ENCODE measurements at regions of chr12 and their contacts with region 1.

Region 1: DNA sequence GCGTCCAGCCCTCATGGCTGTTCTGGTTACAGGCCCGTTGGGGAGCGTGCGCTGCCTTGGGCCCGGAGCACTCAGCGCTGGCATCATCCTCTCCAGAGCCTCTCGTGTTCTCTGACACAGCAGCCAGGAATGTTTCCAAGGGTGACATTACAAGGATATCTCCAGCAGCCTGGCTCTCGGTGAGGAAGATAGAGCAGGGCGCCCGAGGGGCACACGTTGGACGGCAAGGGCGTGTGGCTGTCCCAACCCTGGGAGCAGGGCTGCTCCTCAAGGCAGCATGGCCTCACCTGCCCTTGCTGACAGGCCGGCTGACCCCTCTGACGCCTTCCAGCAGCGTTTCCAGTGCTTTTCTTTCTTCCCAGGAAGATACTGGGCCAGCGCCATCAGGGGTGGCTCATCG is 14.4 kb downstream of the LRCOL1 start:
- DNase-seq: no peak
- H3K4me3 Mint-ChIP-seq: no peak overlapping the region
- H3K27ac Mint-ChIP-seq: no peak overlapping the region
- H3K4me1 Mint-ChIP-seq: peaks cover 23% of the 10 kb centered on the region
- H3K27me3 Mint-ChIP-seq: peaks cover 29% of the 10 kb centered on the region

Region 2: GRCh38 chr12:132040906-132041606 is 555.0 kb before region 1 on chr12:
- CTCF ChIA-PET with region 1: no interaction called
- POLR2A ChIA-PET with region 1: no interaction called
- DNase-seq: no peak
- H3K4me3 Mint-ChIP-seq: no peak overlapping the region
- H3K27ac Mint-ChIP-seq: no peak overlapping the region
- H3K4me1 Mint-ChIP-seq: peaks cover 3% of the 10 kb centered on the region
- H3K27me3 Mint-ChIP-seq: no peaks in the 10 kb centered on the region

Region 3: DNA sequence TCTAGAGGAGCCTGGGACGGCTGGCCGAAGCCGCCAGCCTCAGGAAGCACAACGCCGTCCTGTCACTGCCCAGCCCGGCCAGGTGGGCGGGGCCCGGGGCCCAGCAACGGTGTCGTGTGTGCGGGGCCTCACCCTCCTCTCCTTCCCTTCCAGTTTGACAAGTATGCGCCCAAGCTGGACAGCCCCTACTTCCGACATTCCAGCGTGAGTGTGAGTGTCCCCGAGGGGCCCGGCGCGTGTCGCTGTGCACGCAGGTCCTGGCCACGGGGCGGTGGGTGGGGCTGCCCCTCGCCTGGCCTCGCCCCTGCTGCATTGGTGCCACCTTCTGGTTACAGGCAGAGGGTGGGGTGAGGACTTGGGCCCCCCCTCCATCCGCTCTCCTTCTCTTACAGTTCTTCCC is 23.9 kb before region 1 on chr12:
- CTCF ChIA-PET with region 1: no interaction called
- POLR2A ChIA-PET with region 1: no interaction called
- DNase-seq: no peak
- H3K4me3 Mint-ChIP-seq: no peak overlapping the region
- H3K27ac Mint-ChIP-seq: no peak overlapping the region
- H3K4me1 Mint-ChIP-seq: no peaks in the 10 kb centered on the region
- H3K27me3 Mint-ChIP-seq: no peaks in the 10 kb centered on the region

Region 4: DNA sequence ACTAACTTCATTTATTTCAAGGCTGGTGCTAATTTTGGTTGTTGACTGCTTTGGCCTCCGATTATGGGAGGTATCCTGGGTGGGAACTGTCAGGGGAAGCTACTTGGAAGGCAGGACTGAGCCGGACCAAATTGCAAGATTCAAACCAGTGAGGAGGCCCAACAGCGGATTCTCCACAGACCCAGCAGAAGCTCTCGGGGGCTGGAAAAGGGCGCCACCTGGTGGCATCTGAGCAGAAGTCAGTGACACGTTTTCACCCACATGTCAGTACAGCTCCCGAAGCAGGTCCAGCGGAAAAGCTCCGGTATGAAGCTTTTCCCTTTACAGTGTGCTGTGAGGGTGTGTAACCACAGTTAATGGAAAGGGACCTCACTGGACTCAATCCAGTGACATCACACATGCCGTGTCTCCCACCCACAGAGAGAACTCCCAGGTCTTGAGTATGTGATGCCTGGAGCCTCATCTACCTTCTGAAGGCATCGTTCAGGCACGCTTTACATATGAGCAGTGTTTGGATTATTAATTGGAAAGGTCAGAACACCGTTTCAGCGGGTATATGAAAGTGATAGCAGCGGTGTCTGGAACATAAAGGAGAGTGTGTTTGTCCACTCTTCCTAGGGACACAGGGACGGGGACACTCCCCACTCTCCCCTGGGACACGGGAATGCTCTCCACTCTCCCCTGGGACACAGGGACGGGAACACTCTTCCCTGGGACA is 19.0 kb after region 1 on chr12:
- CTCF ChIA-PET with region 1: interaction called, 11 read pairs
- POLR2A ChIA-PET with region 1: no interaction called
- DNase-seq: peak; percentile 85
- H3K4me3 Mint-ChIP-seq: no peak overlapping the region
- H3K27ac Mint-ChIP-seq: no peak overlapping the region
- H3K4me1 Mint-ChIP-seq: peaks cover 11% of the 10 kb centered on the region
- H3K27me3 Mint-ChIP-seq: peaks cover 34% of the 10 kb centered on the region